GM13976 (cell line): ENCODE measurements at regions of chr17 and their contacts with region 1.

Region 1: DNA sequence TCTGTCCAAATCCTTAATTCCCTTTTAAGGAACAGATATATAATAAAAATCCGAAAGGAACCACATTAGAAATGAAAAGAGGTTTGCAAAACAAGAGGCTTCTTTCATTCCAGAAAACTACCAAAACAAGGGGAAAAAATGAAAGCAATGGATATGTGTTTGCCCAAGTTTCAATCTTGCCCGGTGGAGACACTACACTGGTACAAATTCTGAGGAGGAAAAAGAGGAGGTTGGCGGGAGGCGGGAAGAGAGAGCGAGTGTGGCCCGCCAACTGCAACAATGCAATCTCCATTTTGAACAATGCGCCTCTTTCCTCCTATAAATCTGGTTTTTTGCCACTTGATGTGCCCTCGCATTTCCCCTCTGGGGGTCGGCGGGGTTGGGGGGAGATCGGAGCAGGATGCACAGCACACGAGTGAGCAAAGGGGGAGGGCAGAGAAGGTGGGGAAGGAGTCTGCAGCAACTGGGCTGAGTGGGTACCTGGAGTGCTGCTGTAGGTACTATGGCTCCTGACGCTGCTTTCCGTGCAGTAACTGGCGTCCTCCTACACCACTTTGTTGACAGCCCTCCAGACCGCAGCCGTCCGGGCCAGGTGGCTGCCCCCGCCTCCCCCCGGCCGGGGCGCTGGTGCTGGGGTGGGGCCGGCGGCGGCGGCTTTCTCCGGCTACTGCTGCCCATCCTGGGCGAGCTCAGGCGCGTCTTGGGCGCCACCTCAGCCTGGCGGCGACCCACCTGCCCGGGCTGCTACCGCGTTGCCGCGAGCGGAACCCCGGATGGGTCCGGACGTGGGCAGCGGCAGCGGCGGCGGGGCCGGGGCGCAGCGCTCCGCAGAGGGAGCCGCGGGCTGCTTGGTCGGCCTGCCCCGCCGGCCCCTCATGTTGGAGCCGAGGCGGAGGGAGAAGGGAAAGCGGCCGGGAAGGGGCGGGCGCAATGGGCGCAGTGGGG is 93.8 kb upstream of the PLEKHM1 start:
- DNase-seq: peak; percentile 82
- CTCF ChIP-seq: no peak

Region 2: DNA sequence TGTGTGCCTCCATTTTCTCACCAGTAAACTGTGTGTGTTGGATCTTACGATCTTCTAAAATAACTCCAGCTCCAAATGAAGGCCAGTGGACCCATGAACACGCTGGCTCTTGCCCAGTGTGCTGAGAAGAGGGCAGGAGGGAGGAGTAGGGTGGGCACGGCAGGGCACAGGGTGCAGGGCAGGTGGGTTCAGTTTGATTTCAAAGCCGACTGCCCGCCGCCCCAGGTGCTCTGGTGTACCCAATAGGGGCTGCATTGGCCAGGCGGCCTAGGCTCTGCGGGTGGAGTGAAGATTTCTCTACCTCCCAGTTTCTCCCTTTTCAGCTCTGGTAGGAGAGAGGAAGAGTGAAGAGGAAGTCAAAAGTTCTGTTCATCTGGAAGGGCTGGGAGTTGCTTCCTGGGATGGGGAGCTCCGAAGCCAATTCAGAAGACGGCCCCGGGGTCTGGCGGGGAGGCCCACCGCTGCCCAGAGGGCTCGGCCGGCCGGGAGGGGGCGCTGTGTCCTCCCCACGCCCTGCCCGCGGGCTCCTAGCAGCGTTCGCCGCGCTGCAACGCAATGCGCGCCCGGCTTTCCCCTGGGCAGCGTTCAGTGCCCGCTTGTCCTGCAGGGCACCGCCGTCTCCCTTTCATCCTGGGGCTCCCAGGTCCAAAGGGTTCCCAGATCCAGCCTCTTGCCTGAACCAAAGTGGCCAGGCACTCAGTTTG is 198.7 kb after region 1 on chr17:
- in situ Hi-C with region 1: no loop called
- DNase-seq: peak; percentile 71
- CTCF ChIP-seq: no peak

Region 3: GRCh38 chr17:46266656-46267544 is 682.5 kb after region 1 on chr17:
- in situ Hi-C with region 1: loop called (anchors 25 kb)
- DNase-seq: peak; percentile 95
- CTCF ChIP-seq: no peak